Natural killer cell (primary cell): ENCODE measurements at regions of chr20 and their contacts with region 1.

Region 1: GRCh38 chr20:41339507-41340326 is 904 bp upstream of the LPIN3 start:
- DNase-seq: peak; percentile 81 to 90
- ATAC-seq: peak; percentile 89 to 97 (median 95)
- H3K4me3 ChIP-seq: peak overlapping the region; percentile 15
- H3K4me3 Mint-ChIP-seq: peak overlapping the region; percentile 87
- H3K27ac ChIP-seq: no peak overlapping the region
- H3K27ac Mint-ChIP-seq: peak overlapping the region in 1 of 2 donors; percentile 82
- H3K4me1 ChIP-seq: peaks cover 13% of the 10 kb centered on the region
- H3K4me1 Mint-ChIP-seq: peaks cover 11% of the 10 kb centered on the region in 2 donors
- H3K27me3 ChIP-seq: peaks cover 7% of the 10 kb centered on the region
- H3K27me3 Mint-ChIP-seq: peaks cover 11 to 19% of the 10 kb centered on the region in 2 donors
- CTCF ChIP-seq: peak; percentile 99

Region 2: DNA sequence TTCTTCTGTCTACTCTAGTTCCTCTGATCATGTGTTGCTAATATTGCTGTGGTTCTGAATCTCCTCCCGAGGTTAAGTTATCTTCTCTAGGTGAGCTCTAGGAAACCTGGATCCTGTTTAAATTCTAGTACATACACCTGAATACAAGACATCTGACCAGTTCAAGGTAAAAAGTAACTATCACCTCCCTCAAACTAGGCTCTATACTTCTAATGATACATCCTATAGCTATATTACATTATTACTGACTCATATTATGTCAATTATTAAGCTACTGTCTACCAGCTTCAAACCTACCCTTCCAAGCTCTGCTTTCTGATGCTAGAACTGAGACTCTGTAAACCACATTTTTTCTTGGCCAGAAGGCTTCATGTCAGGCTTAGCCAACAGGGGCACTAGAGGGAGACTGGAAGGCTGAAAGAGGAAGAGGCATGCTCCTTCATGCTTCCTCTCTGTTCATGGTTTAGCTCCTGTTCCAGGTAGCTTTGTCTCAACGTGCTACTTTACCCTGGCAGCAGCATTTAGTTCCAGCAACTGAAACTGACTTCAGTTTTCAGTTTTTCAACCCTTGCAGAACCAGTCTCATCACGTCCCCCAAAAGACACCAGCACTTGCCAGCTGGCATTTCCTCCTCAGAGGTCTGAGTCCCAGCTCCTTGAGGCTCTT is 459.5 kb before region 1 on chr20:
- intact Hi-C with region 1: no loop called
- DNase-seq: no peak
- ATAC-seq: no peak
- H3K4me3 ChIP-seq: no peak overlapping the region
- H3K4me3 Mint-ChIP-seq: peak overlapping the region; percentile 14
- H3K27ac ChIP-seq: no peak overlapping the region
- H3K27ac Mint-ChIP-seq: peak overlapping the region in 1 of 2 donors; percentile 52
- H3K4me1 ChIP-seq: peaks cover 41% of the 10 kb centered on the region
- H3K4me1 Mint-ChIP-seq: peaks cover 47 to 49% of the 10 kb centered on the region in 2 donors
- H3K27me3 ChIP-seq: no peaks in the 10 kb centered on the region
- H3K27me3 Mint-ChIP-seq: peaks cover 0 to under 1% of the 10 kb centered on the region in 2 donors
- CTCF ChIP-seq: no peak

Region 3: DNA sequence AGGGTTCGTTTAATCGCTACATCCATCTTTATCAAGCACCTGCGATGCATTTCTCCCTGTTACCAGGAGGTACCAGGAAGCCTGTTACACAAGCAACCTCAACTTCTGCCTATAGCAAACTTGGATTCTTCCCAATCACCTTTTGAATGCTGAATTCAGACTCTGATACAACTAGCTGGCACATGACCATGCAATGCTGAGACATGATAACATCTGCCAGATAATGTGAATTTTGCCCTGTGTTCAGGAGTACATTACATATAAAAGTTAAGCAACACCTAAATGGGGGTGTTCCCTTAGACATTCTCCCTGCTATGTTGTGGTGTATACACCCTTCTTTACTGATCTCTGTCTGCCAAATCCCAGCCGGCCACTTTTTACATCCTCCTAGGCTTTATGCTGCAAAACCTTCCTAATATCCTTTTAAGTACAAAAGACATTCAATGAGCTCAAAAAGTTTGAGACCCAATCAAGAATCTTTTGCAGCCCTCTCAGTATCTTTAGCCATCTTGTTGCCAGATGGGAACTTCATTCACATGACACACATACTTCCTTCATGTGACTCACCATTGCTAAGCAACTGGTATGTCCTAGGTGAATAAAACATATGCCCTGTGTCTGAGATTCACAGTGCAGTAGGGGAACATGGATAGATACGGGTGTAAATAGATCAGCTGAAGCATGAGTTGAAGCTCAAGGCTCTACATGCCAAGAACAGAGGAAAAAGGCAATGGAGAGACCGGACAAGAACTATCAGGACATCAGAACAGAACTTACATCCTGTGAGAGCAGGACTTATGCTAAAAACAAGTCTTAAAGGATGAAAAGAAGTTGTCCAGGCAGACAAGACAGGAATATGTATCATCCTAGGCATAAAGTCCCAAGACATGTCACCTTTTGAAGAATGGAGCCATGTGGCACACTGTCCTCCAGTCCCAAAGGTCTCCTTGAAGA is 106.5 kb before region 1 on chr20:
- intact Hi-C with region 1: loop called (anchors 5 kb)
- DNase-seq: no peak
- ATAC-seq: no peak
- H3K4me3 ChIP-seq: no peak overlapping the region
- H3K4me3 Mint-ChIP-seq: no peak overlapping the region
- H3K27ac ChIP-seq: no peak overlapping the region
- H3K27ac Mint-ChIP-seq: no peak overlapping the region
- H3K4me1 ChIP-seq: peaks cover 4% of the 10 kb centered on the region
- H3K4me1 Mint-ChIP-seq: peaks cover 7 to 11% of the 10 kb centered on the region in 2 donors
- H3K27me3 ChIP-seq: no peaks in the 10 kb centered on the region
- H3K27me3 Mint-ChIP-seq: no peaks in the 10 kb centered on the region
- CTCF ChIP-seq: no peak

Region 4: GRCh38 chr20:41425180-41425884 is 85.6 kb after region 1 on chr20:
- intact Hi-C with region 1: no loop called
- DNase-seq: no peak
- ATAC-seq: no peak
- H3K4me3 ChIP-seq: no peak overlapping the region
- H3K4me3 Mint-ChIP-seq: no peak overlapping the region
- H3K27ac ChIP-seq: no peak overlapping the region
- H3K27ac Mint-ChIP-seq: no peak overlapping the region
- H3K4me1 ChIP-seq: no peaks in the 10 kb centered on the region
- H3K4me1 Mint-ChIP-seq: peaks cover 0 to 6% of the 10 kb centered on the region in 2 donors
- H3K27me3 ChIP-seq: no peaks in the 10 kb centered on the region
- H3K27me3 Mint-ChIP-seq: no peaks in the 10 kb centered on the region
- CTCF ChIP-seq: no peak

Region 5: DNA sequence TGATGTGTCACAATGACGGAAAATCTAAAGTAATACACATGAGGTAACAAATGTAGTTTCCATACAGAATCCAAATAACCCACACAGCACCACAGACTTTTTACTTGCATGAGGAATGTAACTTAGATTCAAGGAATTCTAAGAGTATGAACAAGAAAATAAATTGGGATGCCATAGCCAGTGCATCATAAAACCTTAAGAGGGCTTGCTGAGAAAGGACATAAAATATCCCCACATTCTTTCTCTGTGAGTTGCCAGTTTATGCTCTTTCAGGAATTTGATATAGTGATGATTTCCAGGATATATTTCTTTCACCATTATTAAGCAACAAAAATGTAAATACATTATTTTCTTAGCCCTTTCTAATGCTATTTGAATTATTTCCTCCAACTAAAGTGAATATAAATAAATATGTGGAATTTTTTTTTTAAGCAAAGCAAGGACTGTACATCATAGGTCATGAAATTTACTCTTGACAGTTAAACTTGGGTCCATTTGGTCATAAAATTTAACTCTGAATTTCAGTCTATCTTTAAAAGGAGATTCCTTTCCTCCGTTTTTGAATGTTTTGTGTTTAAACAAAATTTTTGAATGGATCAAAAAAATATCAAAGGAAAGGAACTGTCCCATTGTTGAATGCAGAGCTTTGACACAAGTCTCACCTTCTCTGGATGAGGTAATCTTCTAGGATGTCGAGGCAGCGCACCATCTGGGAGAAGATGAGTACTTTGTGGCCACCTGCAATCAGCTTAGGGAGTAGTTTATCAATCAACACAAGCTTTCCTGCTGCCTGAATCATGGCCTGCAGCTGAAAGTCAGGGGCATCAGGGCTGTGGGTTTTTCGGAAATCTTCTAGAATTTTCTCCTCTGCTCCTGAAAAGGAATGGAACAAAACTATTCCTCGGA is 143.2 kb after region 1 on chr20:
- intact Hi-C with region 1: no loop called
- DNase-seq: no peak
- ATAC-seq: no peak
- H3K4me3 ChIP-seq: no peak overlapping the region
- H3K4me3 Mint-ChIP-seq: no peak overlapping the region
- H3K27ac ChIP-seq: no peak overlapping the region
- H3K27ac Mint-ChIP-seq: no peak overlapping the region
- H3K4me1 ChIP-seq: no peaks in the 10 kb centered on the region
- H3K4me1 Mint-ChIP-seq: peaks cover 6 to 11% of the 10 kb centered on the region in 2 donors
- H3K27me3 ChIP-seq: no peaks in the 10 kb centered on the region
- H3K27me3 Mint-ChIP-seq: no peaks in the 10 kb centered on the region
- CTCF ChIP-seq: no peak